Activated CD4-positive, alpha-beta memory T cell treated with anti-CD3 and anti-CD28 coated beads, Interleukin-2, amount 10 ng/mL, durations not matched to agents 7 days and 5 days (primary cell): ENCODE measurements at regions of chr1 and their contacts with region 1.

Region 1: DNA sequence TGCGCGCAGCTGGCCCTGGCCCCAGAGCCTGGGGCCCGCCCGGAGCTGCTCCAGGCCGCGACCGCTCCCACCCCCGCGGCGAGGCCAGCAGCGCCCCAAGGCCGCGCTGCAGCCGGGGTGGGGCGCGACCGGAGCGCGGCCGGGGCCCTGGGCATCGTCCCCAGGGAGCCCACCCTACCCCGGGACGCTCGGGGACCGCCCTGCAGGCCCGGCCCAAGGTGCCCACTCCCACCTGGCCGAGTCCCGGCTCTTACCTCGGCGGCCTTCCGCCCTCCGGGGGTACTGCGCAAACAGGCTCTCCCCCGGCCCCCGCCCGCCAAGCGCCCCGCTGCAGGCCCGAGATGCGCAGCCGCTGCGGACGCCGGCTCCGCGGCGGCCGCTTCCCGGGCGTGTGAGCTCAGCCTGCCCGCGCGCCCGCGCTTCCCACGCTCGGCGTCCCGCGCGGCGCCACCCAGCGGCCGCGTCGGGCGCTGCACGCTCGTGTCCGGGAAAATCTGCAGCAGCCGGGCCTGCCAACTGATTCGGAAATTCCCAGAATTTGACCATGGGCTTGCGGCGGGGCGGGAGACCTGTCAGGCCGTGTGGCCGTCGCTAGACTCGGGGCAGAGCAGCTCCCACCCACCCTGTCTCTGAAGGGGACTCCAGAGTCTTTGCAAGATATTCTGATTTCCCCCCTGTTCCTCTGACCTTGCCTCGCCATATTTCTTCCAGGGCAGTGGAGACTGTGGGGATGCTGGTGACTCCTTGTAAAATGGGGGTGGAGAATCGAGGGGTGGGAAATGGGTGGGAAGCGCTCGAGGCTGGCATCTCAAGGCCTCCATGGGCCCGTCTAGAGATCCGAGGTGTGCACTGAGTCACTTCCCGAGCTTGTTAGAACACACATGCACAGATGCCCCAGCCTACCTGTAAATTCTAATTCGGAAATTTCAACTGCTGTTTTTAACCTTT is 41.9 kb downstream of the CD34 start:
- DNase-seq: peak; percentile 76
- H3K4me3 Mint-ChIP-seq: peak overlapping the region; percentile 93
- H3K27ac Mint-ChIP-seq: peak overlapping the region; percentile 91
- H3K4me1 Mint-ChIP-seq: peaks cover 84% of the 10 kb centered on the region
- H3K27me3 Mint-ChIP-seq: no peaks in the 10 kb centered on the region

Region 2: GRCh38 chr1:207811920-207812720 is 56.9 kb before region 1 on chr1:
- CTCF ChIA-PET with region 1: interaction called, 14 read pairs
- POLR2A ChIA-PET with region 1: interaction called, 4 read pairs
- DNase-seq: peak; percentile 18
- H3K4me3 Mint-ChIP-seq: no peak overlapping the region
- H3K27ac Mint-ChIP-seq: no peak overlapping the region
- H3K4me1 Mint-ChIP-seq: peaks cover 53% of the 10 kb centered on the region
- H3K27me3 Mint-ChIP-seq: no peaks in the 10 kb centered on the region

Region 3: GRCh38 chr1:207828485-207829158 is 40.4 kb before region 1 on chr1:
- CTCF ChIA-PET with region 1: interaction called, 297 read pairs
- POLR2A ChIA-PET with region 1: interaction called, 151 read pairs
- DNase-seq: peak; percentile 65
- H3K4me3 Mint-ChIP-seq: no peak overlapping the region
- H3K27ac Mint-ChIP-seq: peak overlapping the region; percentile 16
- H3K4me1 Mint-ChIP-seq: peaks cover 97% of the 10 kb centered on the region
- H3K27me3 Mint-ChIP-seq: no peaks in the 10 kb centered on the region

Region 4: GRCh38 chr1:207838156-207839082 is 30.6 kb before region 1 on chr1:
- CTCF ChIA-PET with region 1: interaction called, 297 read pairs
- POLR2A ChIA-PET with region 1: interaction called, 8 read pairs
- DNase-seq: no peak
- H3K4me3 Mint-ChIP-seq: no peak overlapping the region
- H3K27ac Mint-ChIP-seq: peak overlapping the region; percentile 72
- H3K4me1 Mint-ChIP-seq: peaks cover 46% of the 10 kb centered on the region
- H3K27me3 Mint-ChIP-seq: no peaks in the 10 kb centered on the region

Region 5: GRCh38 chr1:207848234-207848633 is 20.8 kb before region 1 on chr1:
- CTCF ChIA-PET with region 1: interaction called, 18 read pairs
- POLR2A ChIA-PET with region 1: interaction called, 9 read pairs
- DNase-seq: peak; percentile 55
- H3K4me3 Mint-ChIP-seq: peak overlapping the region; percentile 3
- H3K27ac Mint-ChIP-seq: peak overlapping the region; percentile 70
- H3K4me1 Mint-ChIP-seq: peaks cover 54% of the 10 kb centered on the region
- H3K27me3 Mint-ChIP-seq: no peaks in the 10 kb centered on the region

Region 6: GRCh38 chr1:207858806-207859205 is 10.2 kb before region 1 on chr1:
- CTCF ChIA-PET with region 1: interaction called, 20 read pairs
- POLR2A ChIA-PET with region 1: interaction called, 44 read pairs
- DNase-seq: no peak
- H3K4me3 Mint-ChIP-seq: no peak overlapping the region
- H3K27ac Mint-ChIP-seq: no peak overlapping the region
- H3K4me1 Mint-ChIP-seq: peaks cover 52% of the 10 kb centered on the region
- H3K27me3 Mint-ChIP-seq: no peaks in the 10 kb centered on the region

Region 7: DNA sequence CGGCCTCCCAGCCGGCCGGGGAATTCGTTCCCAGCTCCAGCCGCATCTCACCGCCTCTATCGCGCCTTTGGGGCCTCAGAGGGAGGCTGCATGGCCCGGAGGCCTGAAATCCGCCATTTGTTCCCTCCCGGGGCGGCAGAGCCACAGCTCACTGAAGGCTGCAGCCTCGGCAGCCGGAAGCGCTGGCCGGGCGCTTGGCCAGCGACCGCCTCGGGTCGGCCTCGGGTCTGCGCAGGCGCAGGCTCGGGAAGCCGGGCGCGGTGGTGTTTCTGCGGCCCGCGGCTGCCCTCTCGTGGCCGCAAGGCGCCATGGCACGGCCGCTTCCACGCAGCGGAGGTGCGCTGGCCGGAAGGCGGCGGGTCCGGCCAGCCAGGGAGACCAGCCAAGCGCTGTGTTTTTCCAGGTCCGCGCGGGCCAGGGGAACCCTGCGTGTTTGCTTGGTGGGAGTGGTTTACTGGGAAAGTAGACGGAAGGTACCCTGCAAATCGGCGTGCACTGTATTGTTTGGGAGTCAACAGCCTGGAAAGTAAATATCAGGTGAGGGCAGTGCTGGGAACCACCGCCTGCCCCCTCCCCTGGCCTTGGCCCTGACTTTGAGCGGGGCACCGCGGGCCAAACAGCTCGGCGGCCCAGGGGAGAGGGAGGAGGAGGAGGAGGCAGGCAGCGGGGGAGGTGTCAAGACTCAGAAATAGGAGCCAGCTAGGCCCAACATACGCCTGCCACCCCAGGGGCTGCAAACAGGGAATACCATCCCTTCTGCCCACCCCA is 94.6 kb after region 1 on chr1:
- CTCF ChIA-PET with region 1: interaction called, 29 read pairs
- POLR2A ChIA-PET with region 1: interaction called, 7 read pairs
- DNase-seq: peak; percentile 87
- H3K4me3 Mint-ChIP-seq: peak overlapping the region; percentile 74
- H3K27ac Mint-ChIP-seq: peak overlapping the region; percentile 36
- H3K4me1 Mint-ChIP-seq: peaks cover 9% of the 10 kb centered on the region
- H3K27me3 Mint-ChIP-seq: peaks cover 42% of the 10 kb centered on the region